Activated CD8-positive, alpha-beta T cell treated with anti-CD3 and anti-CD28 coated beads for 36 hours (primary cell): ENCODE measurements at regions of chr20 and their contacts with region 1.

Region 1: DNA sequence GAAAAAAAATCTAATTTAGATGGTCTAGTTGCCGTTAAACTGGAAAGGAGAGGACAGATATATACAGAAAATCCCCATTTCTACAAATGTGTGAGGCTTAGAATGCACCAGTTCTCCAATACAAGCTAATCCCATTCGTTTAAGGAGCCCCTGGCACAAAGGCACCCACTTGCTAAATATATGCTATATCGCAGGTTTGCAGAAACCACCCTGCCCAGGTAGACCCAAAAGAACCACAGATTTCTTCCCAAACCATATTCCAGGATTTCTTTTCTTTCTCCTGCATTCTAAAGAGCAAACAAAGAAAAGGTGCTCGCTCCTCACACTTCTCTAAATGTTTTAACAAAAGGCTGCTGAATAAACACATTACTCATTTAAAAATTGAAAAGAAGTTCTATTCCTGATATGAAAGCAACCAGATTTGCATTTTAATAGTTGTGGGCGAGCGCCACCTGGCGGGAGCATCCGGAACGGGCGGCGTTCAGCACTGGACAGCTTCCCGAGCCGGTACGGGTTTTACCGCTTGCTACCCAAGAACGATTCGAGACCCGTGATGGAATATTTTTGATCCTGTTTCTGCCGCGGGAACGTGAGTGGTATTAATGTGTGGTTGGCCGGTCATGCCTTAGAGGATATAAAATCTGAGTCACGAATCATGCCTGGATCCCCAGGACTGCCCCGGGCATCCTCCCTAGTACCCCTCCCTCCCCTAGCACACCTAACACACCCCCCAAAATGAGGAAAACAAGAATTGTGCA is 2.1 kb downstream of the PTPRT start:
- DNase-seq: peak; percentile 81
- ATAC-seq: no peak
- H3K4me3 Mint-ChIP-seq: no peak overlapping the region
- H3K27ac Mint-ChIP-seq: no peak overlapping the region
- H3K4me1 Mint-ChIP-seq: peaks cover 4% of the 10 kb centered on the region
- H3K27me3 Mint-ChIP-seq: peaks cover 37% of the 10 kb centered on the region
- CTCF ChIP-seq: peak; percentile 97

Region 2: GRCh38 chr20:43198607-43199006 is 11.0 kb after region 1 on chr20:
- CTCF ChIA-PET with region 1: interaction called, 10 read pairs
- POLR2A ChIA-PET with region 1: no interaction called
- intact Hi-C with region 1: no loop called
- DNase-seq: no peak
- ATAC-seq: no peak
- H3K4me3 Mint-ChIP-seq: no peak overlapping the region
- H3K27ac Mint-ChIP-seq: no peak overlapping the region
- H3K4me1 Mint-ChIP-seq: no peaks in the 10 kb centered on the region
- H3K27me3 Mint-ChIP-seq: no peaks in the 10 kb centered on the region
- CTCF ChIP-seq: no peak